ENCODE measurements at regions of chr2 and their contacts with region 1.

Region 1: DNA sequence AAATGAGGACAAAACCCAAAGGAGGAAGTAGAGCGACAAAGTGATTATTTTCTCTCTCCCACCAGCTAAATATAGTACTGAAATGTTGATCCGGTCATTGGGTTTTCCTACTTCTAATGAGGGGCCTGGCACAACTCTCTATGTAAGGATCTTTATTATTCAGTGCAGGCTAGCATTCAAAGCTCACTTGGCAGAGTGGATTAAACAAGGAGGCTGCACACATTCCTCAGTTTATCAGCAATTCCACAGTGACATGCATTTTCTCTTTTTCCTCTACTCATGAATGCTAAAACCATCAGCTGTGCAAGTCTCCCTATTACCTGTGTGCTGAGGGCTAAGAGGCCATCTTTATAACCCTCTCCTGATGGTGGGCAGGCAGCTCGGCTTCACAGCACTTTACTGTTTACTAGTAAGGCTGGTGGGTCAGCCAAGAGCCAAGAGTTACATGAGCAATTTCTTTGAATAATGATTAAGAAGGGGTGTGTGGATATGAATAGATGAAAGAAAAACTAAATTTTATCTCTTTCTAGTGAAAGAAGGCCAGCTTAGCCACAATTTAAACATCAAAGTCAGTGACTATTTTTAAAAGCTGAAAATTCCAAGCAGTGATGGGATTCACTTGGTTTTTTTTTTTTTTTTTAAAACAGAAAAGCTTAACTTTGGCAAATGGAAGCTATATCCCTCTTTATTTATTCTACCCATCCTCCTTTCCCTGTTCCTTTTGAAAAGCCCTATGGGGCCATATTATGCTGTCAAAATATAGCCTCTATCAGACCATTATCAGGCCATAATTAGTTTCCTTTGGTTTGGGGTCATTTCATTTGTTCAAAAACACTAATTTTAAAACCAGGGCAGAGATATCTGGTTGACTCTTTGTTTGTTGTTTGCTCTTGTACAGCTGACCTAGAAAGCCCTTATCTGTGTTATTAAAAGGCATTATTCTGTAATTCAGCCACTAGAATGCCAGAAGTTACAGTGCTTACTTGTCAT is 111.0 kb downstream of the RBM43 start:
- DNase-seq: no peak
- H3K4me3 ChIP-seq: no peak overlapping the region
- CTCF ChIP-seq: no peak

Region 2: GRCh38 chr2:151161821-151162551 is 11.4 kb after region 1 on chr2:
- CTCF ChIA-PET with region 1: interaction called, 13 read pairs
- POLR2A ChIA-PET with region 1: no interaction called
- DNase-seq: peak; percentile 28
- H3K4me3 ChIP-seq: no peak overlapping the region
- CTCF ChIP-seq: peak; percentile 44

Measured in AG04449 (cell line).